Activated CD8-positive, alpha-beta memory T cell treated with anti-CD3 and anti-CD28 coated beads, Interleukin-2, amount 10 ng/mL, durations not matched to agents 7 days and 5 days (primary cell): ENCODE measurements at regions of chr9 and their contacts with region 1.

Region 1: DNA sequence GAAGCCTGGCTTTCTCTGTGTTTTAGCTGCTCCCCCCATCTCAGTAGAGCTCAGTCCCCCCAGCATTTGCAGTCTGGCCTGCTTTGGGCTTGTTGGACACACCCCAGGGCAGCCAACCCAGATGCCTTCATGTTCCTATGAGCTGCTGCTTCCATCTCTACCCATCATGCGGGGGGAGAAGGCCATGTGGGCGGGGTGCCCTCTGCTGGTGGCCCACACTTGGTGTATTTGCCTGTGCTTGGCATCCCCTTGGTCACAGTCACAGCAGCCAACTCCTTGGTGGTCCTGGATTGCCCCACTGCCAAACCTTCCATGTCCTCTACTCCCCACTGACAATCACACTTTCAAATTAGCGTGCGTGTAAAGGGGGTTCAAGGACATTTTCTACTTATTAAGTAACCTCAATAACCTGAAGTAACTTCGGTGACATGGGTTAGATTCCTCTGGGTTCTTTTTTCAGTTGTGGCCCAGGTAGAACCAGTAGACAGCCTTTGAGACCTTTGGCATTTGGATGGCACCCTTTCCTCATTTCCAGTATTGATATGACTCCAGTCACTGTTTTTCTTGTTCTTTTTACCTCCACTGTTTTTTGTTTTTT is 42.8 kb downstream of the SNX30 start:
- DNase-seq: peak; percentile 90
- ATAC-seq: peak; percentile 99
- H3K4me3 Mint-ChIP-seq: no peak overlapping the region
- H3K27ac Mint-ChIP-seq: no peak overlapping the region
- H3K4me1 Mint-ChIP-seq: peaks cover 9% of the 10 kb centered on the region
- H3K27me3 Mint-ChIP-seq: no peaks in the 10 kb centered on the region

Region 2: GRCh38 chr9:112443200-112443599 is 350.1 kb before region 1 on chr9:
- CTCF ChIA-PET with region 1: interaction called, 16 read pairs
- DNase-seq: no peak
- ATAC-seq: peak; percentile 68
- H3K4me3 Mint-ChIP-seq: no peak overlapping the region
- H3K27ac Mint-ChIP-seq: no peak overlapping the region
- H3K4me1 Mint-ChIP-seq: peaks cover 2% of the 10 kb centered on the region
- H3K27me3 Mint-ChIP-seq: no peaks in the 10 kb centered on the region

Region 3: GRCh38 chr9:112496074-112496722 is 297.1 kb before region 1 on chr9:
- CTCF ChIA-PET with region 1: no interaction called
- DNase-seq: no peak
- ATAC-seq: no peak
- H3K4me3 Mint-ChIP-seq: no peak overlapping the region
- H3K27ac Mint-ChIP-seq: no peak overlapping the region
- H3K4me1 Mint-ChIP-seq: peaks cover 2% of the 10 kb centered on the region
- H3K27me3 Mint-ChIP-seq: no peaks in the 10 kb centered on the region

Region 4: DNA sequence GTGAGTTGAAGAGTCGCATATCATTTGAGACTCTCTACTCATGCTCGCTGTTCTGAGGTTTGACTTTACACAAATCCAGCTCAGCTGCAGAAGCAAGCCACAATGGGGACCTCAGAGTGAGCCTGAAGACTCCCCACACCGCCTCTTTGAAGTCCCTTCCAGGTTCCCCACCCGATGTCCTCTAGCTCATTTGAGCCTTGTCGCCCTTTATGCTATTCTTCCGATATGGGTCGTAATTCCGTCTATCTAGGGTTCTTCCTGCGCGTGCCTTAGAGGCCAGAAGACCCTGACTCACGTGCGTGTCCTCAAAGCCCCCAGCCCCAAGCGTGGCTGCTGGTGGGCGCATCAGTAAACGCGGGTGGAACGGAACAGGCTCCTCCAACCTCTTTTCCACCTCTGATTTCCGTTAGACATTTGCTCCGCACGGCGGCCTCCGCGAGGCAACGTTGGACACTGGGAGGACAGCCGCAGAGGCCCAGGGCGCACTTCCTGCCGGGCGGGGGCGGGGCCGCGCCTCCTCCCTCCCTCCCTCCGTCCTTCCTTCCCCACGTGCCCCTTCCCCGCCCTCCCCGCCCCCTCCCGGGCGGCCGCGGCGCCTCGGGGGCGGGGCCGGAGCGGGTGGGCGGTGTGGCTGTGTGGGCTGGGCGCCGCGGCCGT is 43.1 kb before region 1 on chr9 and contains the start of gene SNX30:
- CTCF ChIA-PET with region 1: interaction called, 14 read pairs
- DNase-seq: peak; percentile 84
- ATAC-seq: peak; percentile 71
- H3K4me3 Mint-ChIP-seq: peak within 1 kb of the TSS; percentile 82
- H3K27ac Mint-ChIP-seq: peak within 1 kb of the TSS; percentile 75
- H3K4me1 Mint-ChIP-seq: peaks cover 54% of the 10 kb centered on the region
- H3K27me3 Mint-ChIP-seq: peaks cover 23% of the 10 kb centered on the region
- total RNA-seq, gene SNX30: 2.3 to 3.6 TPM